PC-9 (cell line): ENCODE measurements at regions of chr14 and their contacts with region 1.

Region 1: GRCh38 chr14:64338616-64339316 is 44.6 kb upstream of the ESR2 start:
- DNase-seq: peak; percentile 98
- H3K4me3 ChIP-seq: peak overlapping the region; percentile 94
- H3K27ac ChIP-seq: peak overlapping the region; percentile 66
- H3K4me1 ChIP-seq: peaks cover 20% of the 10 kb centered on the region
- H3K27me3 ChIP-seq: no peaks in the 10 kb centered on the region
- CTCF ChIP-seq: no peak

Region 2: DNA sequence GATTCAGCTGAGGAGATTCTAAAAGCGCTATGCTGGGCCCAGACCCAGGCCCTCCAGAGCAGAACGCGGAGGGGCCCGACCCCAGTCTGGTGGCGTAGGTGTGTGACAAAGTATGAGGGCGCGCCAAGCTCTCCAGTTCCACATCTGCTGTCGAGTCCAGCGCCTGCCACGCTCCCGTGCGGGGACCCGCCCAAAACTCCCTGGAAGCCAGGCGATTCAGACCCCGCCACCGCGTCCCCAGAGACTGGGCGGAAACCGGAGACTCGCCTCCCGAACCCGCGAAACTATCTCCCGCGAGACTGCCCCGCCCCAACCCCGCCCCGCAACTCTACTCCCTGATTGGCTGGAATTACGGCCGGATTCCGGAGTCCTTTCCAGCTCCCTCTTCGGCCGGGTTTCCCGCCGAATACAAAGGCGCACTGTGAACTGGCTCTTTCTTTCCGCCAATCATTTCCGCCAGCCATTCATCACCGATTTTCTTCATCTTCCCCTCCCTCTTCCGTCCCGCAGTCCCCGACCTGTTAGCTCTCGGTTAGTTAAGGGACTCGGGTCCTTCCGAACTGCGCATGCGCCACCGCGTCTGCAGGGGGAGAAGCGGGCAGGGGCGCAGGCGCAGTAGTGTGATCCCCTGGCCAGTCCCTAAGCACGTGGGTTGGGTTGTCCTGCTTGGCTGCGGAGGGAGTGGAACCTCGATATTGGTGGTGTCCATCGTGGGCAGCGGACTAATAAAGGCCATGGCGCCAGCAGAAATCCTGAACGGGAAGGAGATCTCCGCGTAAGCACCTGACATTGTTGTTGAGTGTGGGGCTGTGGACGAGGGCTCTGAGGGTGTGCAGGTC is 49.1 kb after region 1 on chr14 and contains the start of gene MTHFD1:
- CTCF ChIA-PET with region 1: interaction called, 4 read pairs
- POLR2A ChIA-PET with region 1: no interaction called
- intact Hi-C with region 1: loop called (anchors 1 kb)
- DNase-seq: peak; percentile 98 to 99
- H3K4me3 ChIP-seq: peak within 1 kb of the TSS; percentile 73
- H3K27ac ChIP-seq: peak within 1 kb of the TSS; percentile 72
- H3K4me1 ChIP-seq: peaks cover 23% of the 10 kb centered on the region
- H3K27me3 ChIP-seq: no peaks in the 10 kb centered on the region
- CTCF ChIP-seq: no peak
- total RNA-seq, gene MTHFD1: 130 and 161 TPM in 2 replicates

Region 3: GRCh38 chr14:64478634-64479250 is 140.0 kb after region 1 on chr14:
- CTCF ChIA-PET with region 1: interaction called, 11 read pairs
- POLR2A ChIA-PET with region 1: interaction called, 9 read pairs
- intact Hi-C with region 1: no loop called
- DNase-seq: no peak
- H3K4me3 ChIP-seq: no peak overlapping the region
- H3K27ac ChIP-seq: no peak overlapping the region
- H3K4me1 ChIP-seq: no peaks in the 10 kb centered on the region
- H3K27me3 ChIP-seq: no peaks in the 10 kb centered on the region
- CTCF ChIP-seq: peak; percentile 79

Region 4: DNA sequence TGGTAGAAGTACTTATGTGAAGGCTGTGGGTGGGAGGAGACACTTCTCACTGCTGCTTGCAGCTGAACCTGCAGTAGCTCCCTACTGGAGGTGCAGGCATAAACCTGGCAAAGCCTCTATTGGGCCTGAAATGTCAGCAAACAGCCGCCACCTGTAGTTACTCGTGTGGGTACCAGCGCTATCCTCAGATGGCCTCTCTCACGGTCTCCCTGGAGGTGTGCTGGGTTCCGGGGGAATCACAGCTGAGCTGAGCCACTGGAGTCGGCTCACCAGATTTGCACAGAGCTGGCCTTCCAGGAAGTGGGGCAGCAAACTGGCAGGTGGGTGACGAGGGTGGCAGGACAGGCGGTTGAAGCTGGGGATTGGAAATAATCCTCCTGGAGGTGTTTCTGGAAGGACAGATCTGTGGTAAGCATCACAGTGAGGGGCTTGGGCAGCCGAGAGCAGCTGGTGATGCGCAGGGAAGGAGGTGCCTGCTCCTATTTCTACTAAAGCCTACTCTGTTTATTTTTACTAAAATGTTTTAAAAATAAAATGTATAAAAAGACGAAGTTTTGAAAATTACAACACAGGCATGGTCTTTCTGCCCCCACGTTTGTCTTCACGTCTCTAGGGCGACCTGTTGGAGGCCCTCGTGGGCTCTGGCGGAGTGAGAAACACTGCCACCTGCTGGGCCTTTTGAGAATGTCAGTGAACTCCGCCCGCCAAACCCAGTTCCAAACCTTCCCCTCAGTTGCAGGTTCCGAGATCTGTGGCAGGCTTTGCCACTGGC is 297.6 kb after region 1 on chr14:
- CTCF ChIA-PET with region 1: interaction called, 5 read pairs
- POLR2A ChIA-PET with region 1: no interaction called
- intact Hi-C with region 1: loop called (anchors 5 kb)
- DNase-seq: peak in 1 of 2 experiments; percentile 68
- H3K4me3 ChIP-seq: no peak overlapping the region
- H3K27ac ChIP-seq: no peak overlapping the region
- H3K4me1 ChIP-seq: peaks cover 34% of the 10 kb centered on the region
- H3K27me3 ChIP-seq: no peaks in the 10 kb centered on the region
- CTCF ChIP-seq: peak; percentile 98